Heart right ventricle (tissue), 16 donors: ENCODE measurements at regions of chr1 and their contacts with region 1.

Region 1: GRCh38 chr1:88683541-88684481 is at the start of gene PKN2:
- DNase-seq: peak; percentile 98
- ATAC-seq: peak; percentile 98 to 100 (median 99)
- H3K4me3 ChIP-seq: peak within 1 kb of the TSS; percentile 85 to 98 (median 95)
- H3K27ac ChIP-seq: peak within 1 kb of the TSS; percentile 76 to 98 (median 93)
- H3K4me1 ChIP-seq: peaks cover 0 to 36% (median 32%) of the 10 kb centered on the region in 9 donors
- H3K27me3 ChIP-seq: no peaks in the 10 kb centered on the region
- CTCF ChIP-seq: peak in 4 of 9 donors; percentile 40 to 63 (median 56)
- total RNA-seq, gene PKN2: 24.9 to 42.8 (median 34.7) TPM

Region 2: DNA sequence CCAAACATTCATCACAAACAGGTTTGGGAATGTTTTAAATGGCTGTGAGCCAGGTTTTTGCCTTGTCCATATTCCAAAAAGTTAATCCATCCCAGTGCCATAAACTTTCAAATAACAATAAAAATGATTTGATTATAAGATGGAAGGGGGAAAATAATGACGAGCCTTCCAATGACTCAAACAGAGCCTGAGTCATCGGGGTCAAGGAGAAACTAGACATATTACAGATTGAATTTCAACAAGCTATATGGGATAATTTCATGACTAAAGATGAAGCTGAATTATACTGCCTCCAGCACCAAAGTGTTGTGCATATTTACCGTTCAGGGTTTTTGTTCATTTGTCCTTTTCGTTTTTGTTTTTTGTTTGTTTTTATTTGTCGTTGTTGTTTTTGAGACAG is 195.5 kb before region 1 on chr1:
- intact Hi-C with region 1: no loop called
- DNase-seq: no peak
- ATAC-seq: no peak
- H3K4me3 ChIP-seq: no peak overlapping the region
- H3K27ac ChIP-seq: no peak overlapping the region
- H3K4me1 ChIP-seq: no peaks in the 10 kb centered on the region
- H3K27me3 ChIP-seq: no peaks in the 10 kb centered on the region
- CTCF ChIP-seq: no peak

Region 3: GRCh38 chr1:88891318-88891950 is 207.6 kb after region 1 on chr1 and contains the start of gene GTF2B:
- intact Hi-C with region 1: loop called in 2 of 10 experiments (anchors 2 to 10 kb)
- DNase-seq: peak; percentile 84 to 96
- ATAC-seq: peak; percentile 89 to 96 (median 95)
- H3K4me3 ChIP-seq: peak within 1 kb of the TSS; percentile 74 to 97 (median 90)
- H3K27ac ChIP-seq: peak within 1 kb of the TSS; percentile 61 to 99 (median 90)
- H3K4me1 ChIP-seq: peaks cover 2 to 39% (median 28%) of the 10 kb centered on the region in 9 donors
- H3K27me3 ChIP-seq: no peaks in the 10 kb centered on the region
- CTCF ChIP-seq: peak in 2 of 9 donors; percentile 5 to 8
- total RNA-seq, gene GTF2B: 10.5 to 16.0 (median 12.6) TPM